Gastrocnemius medialis (tissue), 4 donors: ENCODE measurements at regions of chr10 and their contacts with region 1.

Region 1: GRCh38 chr10:68088744-68089143 is 13.7 kb upstream of the HERC4 start:
- DNase-seq: no peak
- ATAC-seq: no peak
- H3K4me3 ChIP-seq: peak overlapping the region in 2 of 4 donors; percentile 51 to 54
- H3K27ac ChIP-seq: peak overlapping the region; percentile 83 to 94 (median 90)
- H3K4me1 ChIP-seq: peaks cover 22 to 41% of the 10 kb centered on the region in 2 donors
- H3K27me3 ChIP-seq: no peaks in the 10 kb centered on the region
- CTCF ChIP-seq: no peak
- POLR2A ChIP-seq: no peak

Region 2: GRCh38 chr10:68144709-68145108 is 56.0 kb after region 1 on chr10:
- in situ Hi-C with region 1: loop called in 2 of 4 experiments (anchors 5 to 10 kb)
- intact Hi-C with region 1: no loop called
- DNase-seq: no peak
- ATAC-seq: no peak
- H3K4me3 ChIP-seq: no peak overlapping the region
- H3K27ac ChIP-seq: peak overlapping the region; percentile 79 to 88 (median 85)
- H3K4me1 ChIP-seq: peaks cover 22 to 42% of the 10 kb centered on the region in 2 donors
- H3K27me3 ChIP-seq: no peaks in the 10 kb centered on the region
- CTCF ChIP-seq: no peak
- POLR2A ChIP-seq: no peak

Region 3: DNA sequence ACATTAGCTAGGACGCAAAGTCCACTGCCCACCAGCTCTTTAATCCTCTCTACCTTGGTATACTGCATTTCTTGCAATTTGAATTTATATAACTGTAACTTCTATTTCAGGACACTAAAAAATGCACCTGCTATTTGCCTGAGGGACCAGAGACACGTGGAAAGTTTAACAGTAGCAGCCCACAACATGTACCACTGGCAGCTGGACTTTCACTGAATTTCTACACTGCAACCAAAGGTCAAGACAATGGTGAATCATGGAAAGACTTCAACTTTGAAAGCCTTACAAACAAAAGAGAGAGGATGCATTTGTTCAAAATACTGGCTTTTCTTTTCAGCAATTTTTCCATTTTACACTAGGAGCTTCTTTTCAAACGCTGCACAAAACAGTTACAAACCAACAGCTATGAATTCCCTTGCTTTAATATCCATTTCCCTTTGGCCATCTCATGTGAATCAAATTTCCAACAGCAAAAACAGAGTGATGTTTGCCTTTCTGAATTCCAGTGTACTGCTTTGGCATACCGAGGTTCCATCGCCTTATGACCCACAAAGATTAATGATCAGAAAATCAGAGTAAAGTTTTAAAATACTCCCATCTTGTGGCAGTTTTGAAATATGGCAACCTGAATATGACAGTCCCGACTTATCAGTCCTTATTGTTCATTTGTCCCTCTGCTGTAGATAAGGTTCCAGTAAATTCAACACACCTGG is 213.2 kb after region 1 on chr10:
- in situ Hi-C with region 1: no loop called
- intact Hi-C with region 1: no loop called
- DNase-seq: no peak
- ATAC-seq: peak; percentile 74 to 84
- H3K4me3 ChIP-seq: no peak overlapping the region
- H3K27ac ChIP-seq: no peak overlapping the region
- H3K4me1 ChIP-seq: peaks cover 0 to 5% of the 10 kb centered on the region in 2 donors
- H3K27me3 ChIP-seq: no peaks in the 10 kb centered on the region
- CTCF ChIP-seq: peak in 4 of 5 experiments; percentile 26 to 55 (median 45)
- POLR2A ChIP-seq: no peak

Region 4: GRCh38 chr10:68364101-68364886 is 275.6 kb after region 1 on chr10:
- in situ Hi-C with region 1: no loop called
- intact Hi-C with region 1: no loop called
- DNase-seq: no peak
- ATAC-seq: no peak
- H3K4me3 ChIP-seq: no peak overlapping the region
- H3K27ac ChIP-seq: no peak overlapping the region
- H3K4me1 ChIP-seq: no peaks in the 10 kb centered on the region
- H3K27me3 ChIP-seq: no peaks in the 10 kb centered on the region
- CTCF ChIP-seq: no peak
- POLR2A ChIP-seq: no peak